ENCODE measurements at regions of chr16 and their contacts with region 1.

Region 1: DNA sequence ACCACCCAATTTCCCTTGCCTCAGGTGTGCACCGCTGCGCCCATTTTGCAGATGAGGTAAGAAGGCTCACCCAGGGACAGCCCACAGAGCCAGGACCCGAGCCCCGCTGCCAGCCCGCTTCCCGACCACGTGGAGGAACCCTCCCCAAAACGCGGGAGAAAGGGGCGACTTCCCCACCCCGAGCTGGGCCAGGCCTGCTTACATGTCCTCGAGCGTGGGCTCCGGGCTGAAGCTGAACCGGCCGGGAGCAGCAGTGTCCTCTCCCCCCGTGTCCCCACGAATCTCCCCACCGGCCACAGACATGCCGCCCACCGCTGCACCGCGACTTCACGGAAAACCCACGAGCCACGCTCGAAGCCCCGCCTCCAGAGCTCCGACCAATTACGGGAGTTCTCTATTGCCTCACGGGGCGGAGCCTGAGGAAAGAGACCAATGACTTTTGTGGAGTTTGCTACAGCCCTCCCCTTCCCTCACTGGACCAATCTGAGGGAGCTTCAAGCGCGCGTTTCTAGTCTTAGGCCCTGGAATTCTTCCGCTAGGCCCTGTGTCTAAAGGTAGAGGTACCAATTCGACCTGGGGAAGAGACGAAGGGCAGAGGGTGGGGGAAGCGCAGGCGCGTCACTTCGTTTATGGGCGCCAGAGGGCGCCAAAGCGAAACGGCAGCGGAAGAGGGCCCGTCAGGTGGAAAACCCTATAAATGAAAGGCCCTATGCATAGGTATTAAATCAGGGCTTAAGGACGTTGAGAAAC is at the start of gene DCTPP1:
- DNase-seq: peak; percentile 92 to 98 (median 96)
- H3K4me3 ChIP-seq: peak within 1 kb of the TSS; percentile 81
- H3K4me3 Mint-ChIP-seq: no peak within 1 kb of the TSS
- H3K27ac ChIP-seq: peak within 1 kb of the TSS; percentile 62
- H3K27ac Mint-ChIP-seq: peak within 1 kb of the TSS in 1 of 8 donors; percentile 70
- H3K4me1 ChIP-seq: peaks cover 25% of the 10 kb centered on the region
- H3K4me1 Mint-ChIP-seq: peaks cover 17 to 20% (median 20%) of the 10 kb centered on the region in 3 donors
- H3K27me3 ChIP-seq: no peaks in the 10 kb centered on the region
- H3K27me3 Mint-ChIP-seq: no peaks in the 10 kb centered on the region
- total RNA-seq, gene DCTPP1: 174 to 175 TPM

Region 2: DNA sequence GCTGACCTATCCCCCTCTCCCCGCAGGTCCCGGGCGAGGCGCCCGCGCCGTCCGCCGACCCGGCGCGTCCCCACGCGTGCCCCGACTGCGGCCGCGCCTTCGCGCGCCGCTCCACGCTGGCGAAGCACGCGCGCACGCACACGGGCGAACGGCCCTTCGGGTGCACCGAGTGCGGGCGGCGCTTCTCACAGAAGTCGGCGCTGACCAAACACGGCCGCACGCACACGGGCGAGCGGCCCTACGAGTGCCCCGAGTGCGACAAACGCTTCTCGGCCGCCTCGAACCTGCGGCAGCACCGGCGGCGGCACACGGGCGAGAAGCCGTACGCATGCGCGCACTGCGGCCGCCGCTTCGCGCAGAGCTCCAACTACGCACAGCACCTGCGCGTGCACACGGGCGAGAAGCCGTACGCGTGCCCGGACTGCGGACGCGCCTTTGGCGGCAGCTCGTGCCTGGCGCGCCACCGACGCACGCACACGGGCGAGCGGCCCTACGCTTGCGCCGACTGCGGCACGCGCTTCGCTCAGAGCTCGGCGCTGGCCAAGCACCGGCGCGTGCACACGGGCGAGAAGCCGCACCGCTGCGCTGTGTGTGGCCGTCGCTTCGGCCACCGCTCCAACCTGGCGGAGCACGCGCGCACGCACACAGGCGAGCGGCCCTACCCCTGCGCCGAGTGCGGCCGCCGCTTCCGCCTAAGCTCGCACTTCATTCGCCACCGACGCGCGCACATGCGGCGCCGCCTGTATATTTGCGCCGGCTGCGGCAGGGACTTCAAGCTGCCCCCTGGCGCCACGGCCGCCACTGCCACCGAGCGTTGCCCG is 12.1 kb before region 1 on chr16:
- CTCF ChIA-PET with region 1: interaction called, 22 read pairs
- POLR2A ChIA-PET with region 1: interaction called, 35 read pairs
- DNase-seq: peak; percentile 80 to 93 (median 89)
- H3K4me3 ChIP-seq: peak overlapping the region; percentile 68
- H3K4me3 Mint-ChIP-seq: peak overlapping the region; percentile 58 to 86 (median 71)
- H3K27ac ChIP-seq: peak overlapping the region; percentile 65
- H3K27ac Mint-ChIP-seq: peak overlapping the region in 4 of 8 donors; percentile 68 to 88 (median 75)
- H3K4me1 ChIP-seq: peaks cover 11% of the 10 kb centered on the region
- H3K4me1 Mint-ChIP-seq: peaks cover 14 to 16% (median 14%) of the 10 kb centered on the region in 3 donors
- H3K27me3 ChIP-seq: no peaks in the 10 kb centered on the region
- H3K27me3 Mint-ChIP-seq: peaks cover 0 to 1% of the 10 kb centered on the region in 2 donors

Region 3: DNA sequence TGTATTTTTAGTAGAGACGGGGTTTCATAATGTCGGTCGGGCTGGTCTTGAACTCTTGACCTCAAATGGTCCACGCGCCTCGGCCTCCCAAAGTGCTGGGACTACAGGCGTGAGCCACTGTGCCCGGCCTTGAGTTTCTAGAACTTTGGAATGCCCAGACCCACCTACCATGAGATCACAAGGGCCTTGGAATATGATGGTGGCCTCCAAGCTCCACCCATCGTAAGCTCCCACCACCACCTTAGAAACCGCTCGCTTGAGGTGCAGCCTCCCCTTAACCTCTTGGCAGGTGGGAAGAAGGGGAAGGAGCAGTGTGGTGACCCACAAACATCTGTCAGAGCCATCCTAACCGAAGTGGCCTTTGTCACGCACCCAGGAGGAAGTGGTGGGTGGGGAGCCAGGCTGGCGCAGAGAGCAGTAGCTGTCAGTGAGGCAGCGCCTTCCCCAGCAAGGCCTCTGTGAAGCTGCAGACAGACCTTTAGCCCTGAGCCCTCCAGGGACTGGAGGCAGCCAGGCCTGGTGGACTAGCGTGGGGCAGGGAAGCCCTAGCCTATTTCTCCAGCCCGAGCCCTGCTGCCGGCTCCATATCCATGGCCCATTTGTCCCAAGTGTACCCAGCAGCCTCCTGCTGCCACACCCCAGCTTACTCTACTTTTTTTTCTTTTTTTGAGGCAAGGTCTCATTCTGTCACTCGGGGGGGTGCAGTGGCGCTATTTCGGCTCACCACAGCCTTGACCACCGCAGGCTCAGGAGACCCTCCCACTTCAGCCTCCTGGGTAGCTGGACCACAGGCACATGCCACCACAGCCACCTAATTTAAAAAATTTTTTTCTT is 28.9 kb after region 1 on chr16:
- CTCF ChIA-PET with region 1: interaction called, 16 read pairs
- POLR2A ChIA-PET with region 1: interaction called, 3 read pairs
- DNase-seq: peak; percentile 50 to 89 (median 71)
- H3K4me3 ChIP-seq: peak overlapping the region; percentile 18
- H3K4me3 Mint-ChIP-seq: peak overlapping the region; percentile 41 to 82 (median 70)
- H3K27ac ChIP-seq: no peak overlapping the region
- H3K27ac Mint-ChIP-seq: peak overlapping the region; percentile 68 to 95 (median 89)
- H3K4me1 ChIP-seq: peaks cover 25% of the 10 kb centered on the region
- H3K4me1 Mint-ChIP-seq: peaks cover 41 to 72% (median 63%) of the 10 kb centered on the region in 3 donors
- H3K27me3 ChIP-seq: no peaks in the 10 kb centered on the region
- H3K27me3 Mint-ChIP-seq: no peaks in the 10 kb centered on the region

Region 4: DNA sequence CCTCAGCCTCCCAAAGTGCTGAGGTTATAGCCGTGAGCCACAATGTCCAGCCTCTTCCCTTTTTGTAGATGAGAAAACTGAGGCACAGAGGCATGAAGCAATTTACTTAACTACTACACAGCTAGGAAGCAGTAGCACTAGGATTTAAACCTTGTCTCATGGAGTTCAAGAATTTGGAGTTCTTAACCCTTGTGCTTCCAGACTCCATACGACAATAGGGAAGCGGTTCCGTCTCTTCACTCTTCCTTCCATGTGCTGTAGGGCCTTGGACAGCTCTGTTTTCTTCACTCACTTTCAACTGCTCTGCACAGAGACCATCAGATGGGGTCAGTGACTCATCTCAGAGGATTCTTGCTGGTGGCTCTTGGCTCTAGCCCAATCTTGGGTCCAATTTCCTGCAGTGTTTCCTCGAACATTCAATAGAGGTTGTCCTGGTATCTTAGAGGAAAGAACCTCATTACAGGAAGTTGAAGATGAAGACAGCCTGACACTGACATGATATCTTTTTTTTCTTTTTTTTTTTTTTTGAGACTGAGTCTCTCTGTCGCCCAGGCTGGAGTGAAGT is 62.0 kb after region 1 on chr16:
- CTCF ChIA-PET with region 1: interaction called, 20 read pairs
- POLR2A ChIA-PET with region 1: interaction called, 7 read pairs
- DNase-seq: peak in 3 of 5 donors; percentile 10 to 68 (median 28)
- H3K4me3 ChIP-seq: no peak overlapping the region
- H3K4me3 Mint-ChIP-seq: peak overlapping the region in 2 of 7 donors; percentile 6 to 46
- H3K27ac ChIP-seq: peak overlapping the region; percentile 44
- H3K27ac Mint-ChIP-seq: peak overlapping the region in 5 of 8 donors; percentile 57 to 91 (median 68)
- H3K4me1 ChIP-seq: peaks cover 13% of the 10 kb centered on the region
- H3K4me1 Mint-ChIP-seq: peaks cover 20 to 45% (median 28%) of the 10 kb centered on the region in 3 donors
- H3K27me3 ChIP-seq: no peaks in the 10 kb centered on the region
- H3K27me3 Mint-ChIP-seq: no peaks in the 10 kb centered on the region

Region 5: DNA sequence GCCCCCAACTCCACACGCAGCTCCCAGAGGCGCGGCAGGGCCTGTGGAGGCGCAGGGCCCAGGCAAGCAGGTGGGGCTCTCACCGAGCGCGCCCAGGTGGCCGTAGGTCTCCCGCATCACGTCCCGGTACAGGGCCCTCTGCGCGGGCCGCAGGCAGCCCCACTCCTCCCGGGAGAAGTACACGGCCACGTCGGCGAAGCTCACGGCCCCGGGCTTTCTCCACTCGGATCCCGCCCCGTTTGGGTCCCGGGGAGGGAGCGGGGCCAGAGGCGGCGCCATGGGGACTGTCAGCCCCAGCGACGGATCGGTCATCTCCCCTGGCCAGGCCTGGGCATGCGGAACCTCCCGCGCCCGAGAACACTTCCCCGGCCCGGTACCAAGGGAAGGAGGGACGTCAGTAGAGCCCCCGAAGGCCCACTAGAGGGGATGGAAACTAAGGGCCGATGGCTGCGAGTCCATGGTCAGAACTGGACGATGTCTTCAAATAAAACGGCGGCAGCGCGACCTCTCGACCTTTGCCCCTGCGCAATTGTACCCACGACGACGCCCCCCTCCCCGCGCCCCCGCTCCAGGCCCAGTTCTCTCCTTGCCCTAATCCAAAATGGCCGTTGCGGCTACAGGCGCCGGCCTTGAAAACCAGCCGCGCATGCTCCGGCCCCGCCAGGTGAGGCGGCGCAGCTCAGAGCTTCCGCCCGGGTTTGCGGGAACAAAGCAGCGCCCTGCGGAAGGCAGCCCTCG is 104.7 kb after region 1 on chr16 and contains the start of gene ZNF747:
- CTCF ChIA-PET with region 1: interaction called, 39 read pairs
- POLR2A ChIA-PET with region 1: interaction called, 6 read pairs
- DNase-seq: peak; percentile 86 to 94 (median 87)
- H3K4me3 ChIP-seq: peak within 1 kb of the TSS; percentile 98
- H3K4me3 Mint-ChIP-seq: peak within 1 kb of the TSS; percentile 89 to 98 (median 92)
- H3K27ac ChIP-seq: peak within 1 kb of the TSS; percentile 91
- H3K27ac Mint-ChIP-seq: peak within 1 kb of the TSS; percentile 92 to 99 (median 98)
- H3K4me1 ChIP-seq: peaks cover 20% of the 10 kb centered on the region
- H3K4me1 Mint-ChIP-seq: peaks cover 18 to 39% (median 25%) of the 10 kb centered on the region in 3 donors
- H3K27me3 ChIP-seq: no peaks in the 10 kb centered on the region
- H3K27me3 Mint-ChIP-seq: no peaks in the 10 kb centered on the region
- total RNA-seq, gene ZNF747: 13.5 to 17.0 TPM

Region 6: GRCh38 chr16:30602616-30603277 is 172.9 kb after region 1 on chr16:
- CTCF ChIA-PET with region 1: interaction called, 14 read pairs
- POLR2A ChIA-PET with region 1: interaction called, 5 read pairs
- DNase-seq: no peak
- H3K4me3 ChIP-seq: no peak overlapping the region
- H3K4me3 Mint-ChIP-seq: no peak overlapping the region
- H3K27ac ChIP-seq: no peak overlapping the region
- H3K27ac Mint-ChIP-seq: peak overlapping the region in 2 of 8 donors; percentile 23 to 56
- H3K4me1 ChIP-seq: no peaks in the 10 kb centered on the region
- H3K4me1 Mint-ChIP-seq: peaks cover 4% of the 10 kb centered on the region in 3 donors
- H3K27me3 ChIP-seq: no peaks in the 10 kb centered on the region
- H3K27me3 Mint-ChIP-seq: no peaks in the 10 kb centered on the region